ENCODE measurements at regions of chr7 and their contacts with region 1.

Region 1: DNA sequence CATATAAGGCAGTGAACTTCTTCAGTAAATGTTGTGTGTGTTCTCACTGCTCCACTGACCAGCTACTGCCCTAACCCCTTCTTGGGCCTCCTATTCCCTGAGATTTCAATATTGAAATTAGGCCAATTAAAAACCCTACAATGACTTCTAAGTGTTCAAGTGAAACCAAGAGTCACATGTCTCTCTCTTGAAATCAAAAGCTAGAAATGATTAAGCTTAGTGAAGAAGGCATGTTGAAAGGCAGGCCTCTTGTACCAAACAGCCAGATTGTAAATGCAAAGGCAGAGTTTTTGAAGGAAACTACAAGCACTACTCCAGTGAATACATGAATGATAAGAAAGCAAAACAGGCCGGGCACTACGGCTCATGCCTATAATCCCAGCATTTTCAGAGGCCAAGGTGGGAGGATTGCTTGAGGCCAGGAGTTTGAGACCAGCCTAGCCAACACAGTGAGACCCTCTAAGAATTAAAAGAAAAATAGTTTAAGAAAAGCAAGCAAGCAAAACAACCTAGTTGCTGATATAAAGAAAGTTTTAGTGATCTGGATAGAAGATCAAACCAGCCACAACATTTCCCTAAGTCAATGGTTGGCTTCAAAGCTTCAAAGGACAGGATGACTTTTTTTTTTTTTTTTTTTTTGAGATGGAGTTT is 22.3 kb downstream of the BRAF start:
- DNase-seq: peak in 3 of 14 experiments; percentile 47 to 58 (median 56)
- ATAC-seq: peak; percentile 63
- H3K4me3 ChIP-seq: no peak overlapping the region
- H3K4me3 Mint-ChIP-seq: peak overlapping the region; percentile 49
- H3K27ac ChIP-seq: peak overlapping the region in 1 of 2 donors; percentile 51
- H3K27ac Mint-ChIP-seq: peak overlapping the region; percentile 51
- H3K4me1 ChIP-seq: peaks cover 14% of the 10 kb centered on the region
- H3K4me1 Mint-ChIP-seq: peaks cover 82% of the 10 kb centered on the region
- H3K27me3 ChIP-seq: no peaks in the 10 kb centered on the region
- H3K27me3 Mint-ChIP-seq: no peaks in the 10 kb centered on the region
- CTCF ChIP-seq: no peak

Region 2: DNA sequence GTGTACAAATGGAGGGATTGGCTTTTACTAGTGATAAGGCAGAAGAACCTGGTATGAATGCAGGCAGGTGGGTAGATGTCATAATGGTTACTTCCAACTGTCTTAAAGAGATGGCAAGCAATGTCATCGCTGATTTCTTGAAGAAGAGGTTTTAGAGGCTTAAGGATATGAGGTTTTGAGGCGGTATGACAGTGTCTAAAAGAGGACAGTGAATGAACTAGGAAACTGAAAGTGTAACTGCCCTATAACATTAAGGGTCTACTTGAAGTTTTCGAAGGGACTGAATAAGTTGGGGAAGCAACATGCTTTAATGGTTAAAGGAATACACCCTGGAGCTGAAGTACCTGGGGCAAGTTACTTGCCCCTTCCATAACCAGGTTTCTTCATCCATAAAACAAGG is 135.0 kb before region 1 on chr7:
- CTCF ChIA-PET with region 1: no interaction called
- POLR2A ChIA-PET with region 1: no interaction called
- intact Hi-C with region 1: no loop called
- DNase-seq: no peak
- ATAC-seq: no peak
- H3K4me3 ChIP-seq: no peak overlapping the region
- H3K4me3 Mint-ChIP-seq: no peak overlapping the region
- H3K27ac ChIP-seq: no peak overlapping the region
- H3K27ac Mint-ChIP-seq: no peak overlapping the region
- H3K4me1 ChIP-seq: no peaks in the 10 kb centered on the region
- H3K4me1 Mint-ChIP-seq: no peaks in the 10 kb centered on the region
- H3K27me3 ChIP-seq: no peaks in the 10 kb centered on the region
- H3K27me3 Mint-ChIP-seq: no peaks in the 10 kb centered on the region
- CTCF ChIP-seq: no peak

Region 3: GRCh38 chr7:140914083-140914482 is 11.7 kb after region 1 on chr7:
- CTCF ChIA-PET with region 1: interaction called, 4 read pairs
- POLR2A ChIA-PET with region 1: interaction called, 4 read pairs
- intact Hi-C with region 1: loop called (anchors 1 to 2 kb)
- DNase-seq: no peak
- ATAC-seq: no peak
- H3K4me3 ChIP-seq: no peak overlapping the region
- H3K4me3 Mint-ChIP-seq: no peak overlapping the region
- H3K27ac ChIP-seq: no peak overlapping the region
- H3K27ac Mint-ChIP-seq: no peak overlapping the region
- H3K4me1 ChIP-seq: peaks cover 4% of the 10 kb centered on the region
- H3K4me1 Mint-ChIP-seq: peaks cover 68% of the 10 kb centered on the region
- H3K27me3 ChIP-seq: no peaks in the 10 kb centered on the region
- H3K27me3 Mint-ChIP-seq: no peaks in the 10 kb centered on the region
- CTCF ChIP-seq: no peak

Region 4: DNA sequence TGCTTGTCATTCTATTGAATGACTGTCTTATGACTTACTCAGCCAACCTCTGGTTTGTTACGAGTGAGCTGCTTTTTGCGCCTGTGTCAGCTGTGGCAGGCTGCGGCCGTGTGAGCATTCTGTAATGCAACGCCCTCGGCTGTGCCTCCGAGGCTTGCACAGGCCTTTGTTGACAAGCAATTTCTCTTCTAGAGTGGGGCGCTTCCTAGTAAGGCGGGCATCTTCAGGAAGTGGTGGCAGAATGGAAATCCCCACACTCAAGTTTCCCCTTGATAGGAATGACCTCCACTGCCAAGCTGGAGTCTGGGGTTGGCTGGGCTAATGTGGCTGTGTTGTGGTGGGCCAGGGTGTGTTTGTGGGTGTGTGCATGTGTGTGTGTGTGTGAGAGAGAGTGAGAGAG is 151.2 kb after region 1 on chr7:
- CTCF ChIA-PET with region 1: no interaction called
- POLR2A ChIA-PET with region 1: no interaction called
- intact Hi-C with region 1: no loop called
- DNase-seq: peak in 13 of 14 experiments; percentile 19 to 88 (median 40)
- ATAC-seq: peak; percentile 91
- H3K4me3 ChIP-seq: no peak overlapping the region
- H3K4me3 Mint-ChIP-seq: no peak overlapping the region
- H3K27ac ChIP-seq: peak overlapping the region in 1 of 2 donors; percentile 16
- H3K27ac Mint-ChIP-seq: peak overlapping the region; percentile 37
- H3K4me1 ChIP-seq: peaks cover 17% of the 10 kb centered on the region
- H3K4me1 Mint-ChIP-seq: peaks cover 14% of the 10 kb centered on the region
- H3K27me3 ChIP-seq: no peaks in the 10 kb centered on the region
- H3K27me3 Mint-ChIP-seq: peaks cover 33% of the 10 kb centered on the region
- CTCF ChIP-seq: no peak